PC-3 (cell line): ENCODE measurements at regions of chr5 and their contacts with region 1.

Region 1: GRCh38 chr5:159209438-159210305 is at the start of gene RNF145:
- DNase-seq: peak; percentile 72
- ATAC-seq: peak; percentile 61
- H3K4me3 ChIP-seq: peak within 1 kb of the TSS; percentile 95
- H3K27ac ChIP-seq: peak within 1 kb of the TSS; percentile 93
- H3K4me1 ChIP-seq: peaks cover 32% of the 10 kb centered on the region
- H3K27me3 ChIP-seq: no peaks in the 10 kb centered on the region
- CTCF ChIP-seq: no peak
- total RNA-seq, gene RNF145: 13.7 and 21.8 TPM in 2 replicates

Region 2: DNA sequence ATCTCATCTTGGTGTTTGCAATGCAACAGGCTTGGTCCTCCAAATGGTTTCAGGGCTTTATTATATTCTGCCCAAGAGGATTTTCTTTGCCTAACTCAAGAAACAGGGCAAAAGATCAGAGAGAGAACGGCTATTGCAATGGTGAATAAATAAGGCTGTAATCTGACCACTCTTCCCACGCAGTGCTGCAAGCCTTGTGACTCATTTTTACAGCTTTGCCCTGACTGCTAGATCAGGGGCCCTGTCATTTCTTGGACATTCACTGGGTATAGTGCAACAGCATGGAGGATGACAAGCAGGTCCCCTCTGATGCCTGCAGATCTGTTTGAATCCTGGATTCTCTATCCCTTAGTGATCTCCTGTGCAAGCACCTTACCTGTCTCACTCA is 569.1 kb before region 1 on chr5:
- CTCF ChIA-PET with region 1: no interaction called
- POLR2A ChIA-PET with region 1: no interaction called
- intact Hi-C with region 1: no loop called
- DNase-seq: peak; percentile 64
- ATAC-seq: peak; percentile 40; the same call in 1 of the 2 replicates
- H3K4me3 ChIP-seq: no peak overlapping the region
- H3K27ac ChIP-seq: peak overlapping the region; percentile 46
- H3K4me1 ChIP-seq: peaks cover 8% of the 10 kb centered on the region
- H3K27me3 ChIP-seq: no peaks in the 10 kb centered on the region
- CTCF ChIP-seq: no peak

Region 3: DNA sequence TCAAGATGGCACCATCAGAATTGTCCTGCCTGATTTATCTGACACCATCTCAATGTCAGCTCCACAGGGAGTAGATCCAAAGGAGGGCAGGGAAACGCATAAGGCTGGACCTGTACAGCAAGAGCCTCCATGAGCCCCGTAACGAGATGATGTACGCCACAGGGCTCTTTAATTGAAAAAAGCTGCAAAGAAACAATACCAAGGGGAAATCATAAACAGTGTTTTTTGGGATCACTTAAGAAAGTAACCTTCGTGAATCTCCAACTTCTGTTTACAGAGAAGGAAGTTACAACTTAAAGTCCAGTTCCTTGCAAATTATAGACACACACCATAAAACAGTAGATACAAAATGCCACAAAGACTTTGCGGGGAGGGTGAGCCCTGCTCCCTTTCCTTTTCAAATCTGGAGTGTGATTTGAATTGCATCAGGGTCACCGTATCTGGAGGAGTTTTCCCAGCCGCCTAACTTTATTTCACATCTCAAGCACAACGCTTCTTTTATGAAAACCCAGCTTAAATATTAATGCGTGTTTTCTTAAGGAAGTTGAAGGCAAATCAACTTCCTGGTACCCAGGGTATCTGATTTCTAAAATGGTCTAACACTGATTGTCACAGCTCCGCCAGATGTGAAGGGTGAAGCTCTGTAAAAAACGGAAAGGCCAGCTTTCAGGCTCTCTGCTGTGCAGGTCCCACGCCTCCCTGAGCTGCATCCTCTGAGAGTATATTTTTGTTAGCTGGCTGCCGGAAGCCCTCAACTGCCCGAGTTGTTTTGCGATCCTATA is 198.8 kb before region 1 on chr5:
- CTCF ChIA-PET with region 1: no interaction called
- POLR2A ChIA-PET with region 1: no interaction called
- intact Hi-C with region 1: no loop called
- DNase-seq: no peak
- ATAC-seq: no peak
- H3K4me3 ChIP-seq: no peak overlapping the region
- H3K27ac ChIP-seq: no peak overlapping the region
- H3K4me1 ChIP-seq: no peaks in the 10 kb centered on the region
- H3K27me3 ChIP-seq: no peaks in the 10 kb centered on the region
- CTCF ChIP-seq: no peak

Region 4: GRCh38 chr5:159156426-159157238 is 53.0 kb before region 1 on chr5:
- CTCF ChIA-PET with region 1: interaction called, 11 read pairs
- POLR2A ChIA-PET with region 1: interaction called, 4 read pairs
- intact Hi-C with region 1: loop called (anchors 2 kb)
- DNase-seq: peak; percentile 73
- ATAC-seq: peak; percentile 85
- H3K4me3 ChIP-seq: no peak overlapping the region
- H3K27ac ChIP-seq: no peak overlapping the region
- H3K4me1 ChIP-seq: no peaks in the 10 kb centered on the region
- H3K27me3 ChIP-seq: no peaks in the 10 kb centered on the region
- CTCF ChIP-seq: peak; percentile 80

Region 5: DNA sequence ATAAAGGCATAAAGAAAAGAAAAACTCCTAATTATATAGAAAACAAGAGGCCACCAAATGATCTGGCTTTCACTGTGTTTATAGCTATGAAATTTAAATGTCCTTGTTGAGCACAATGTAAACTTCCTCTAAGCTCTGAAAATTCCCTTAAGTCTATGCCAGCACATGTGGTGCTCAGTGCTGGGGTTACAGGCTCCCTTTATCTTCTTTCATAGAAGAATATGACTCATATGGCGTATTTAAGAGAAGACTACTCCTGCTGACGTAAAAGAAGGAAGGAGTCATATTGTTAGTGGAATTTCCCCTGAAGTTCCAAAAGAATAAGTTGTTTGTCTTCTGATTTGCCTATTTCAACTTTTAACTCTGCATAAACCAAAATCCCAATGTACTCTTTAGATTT is 30.7 kb before region 1 on chr5:
- CTCF ChIA-PET with region 1: no interaction called
- POLR2A ChIA-PET with region 1: no interaction called
- intact Hi-C with region 1: loop called (anchors 1 kb)
- DNase-seq: peak; percentile 81
- ATAC-seq: peak; percentile 92
- H3K4me3 ChIP-seq: no peak overlapping the region
- H3K27ac ChIP-seq: peak overlapping the region; percentile 98
- H3K4me1 ChIP-seq: peaks cover 47% of the 10 kb centered on the region
- H3K27me3 ChIP-seq: no peaks in the 10 kb centered on the region
- CTCF ChIP-seq: no peak

Region 6: GRCh38 chr5:159189029-159189709 is 20.5 kb before region 1 on chr5:
- CTCF ChIA-PET with region 1: interaction called, 3 read pairs
- POLR2A ChIA-PET with region 1: interaction called, 7 read pairs
- intact Hi-C with region 1: loop called (anchors 1 kb)
- DNase-seq: peak; percentile 53
- ATAC-seq: peak; percentile 56
- H3K4me3 ChIP-seq: no peak overlapping the region
- H3K27ac ChIP-seq: peak overlapping the region; percentile 75
- H3K4me1 ChIP-seq: peaks cover 37% of the 10 kb centered on the region
- H3K27me3 ChIP-seq: no peaks in the 10 kb centered on the region
- CTCF ChIP-seq: no peak

Region 7: DNA sequence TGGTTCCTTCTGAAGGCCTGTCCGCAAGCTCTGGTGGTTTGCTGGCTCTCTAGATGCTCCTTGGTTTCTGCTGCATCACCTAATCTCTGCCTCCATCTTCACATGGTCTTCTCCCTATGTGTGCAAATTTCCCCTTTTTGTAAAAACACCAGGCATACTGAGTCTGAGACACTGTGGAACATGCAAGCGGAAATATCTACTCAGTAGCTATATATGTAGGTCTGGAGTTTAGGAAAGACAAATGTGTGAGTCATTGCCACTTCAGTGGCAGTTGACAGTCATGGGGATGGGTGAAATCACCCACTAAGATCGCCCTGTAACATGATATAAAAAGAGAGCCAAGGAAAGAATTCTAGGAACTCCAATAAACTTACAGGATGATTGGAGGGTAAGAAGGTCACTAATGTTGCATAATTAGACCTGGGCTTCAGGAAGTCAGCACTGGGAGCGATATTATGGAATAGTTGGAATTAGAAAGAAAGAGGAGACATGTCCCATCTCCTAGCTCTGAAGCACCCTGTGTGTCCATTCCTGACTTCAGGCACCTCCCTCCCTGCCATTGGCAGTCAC is 30.7 kb after region 1 on chr5:
- CTCF ChIA-PET with region 1: no interaction called
- POLR2A ChIA-PET with region 1: no interaction called
- intact Hi-C with region 1: loop called (anchors 1 kb)
- DNase-seq: peak; percentile 85
- ATAC-seq: peak; percentile 99
- H3K4me3 ChIP-seq: 0 out of 2 replicates have a peak overlapping the region, but pooled peaks have one; percentile 17
- H3K27ac ChIP-seq: peak overlapping the region; percentile 42
- H3K4me1 ChIP-seq: peaks cover 17% of the 10 kb centered on the region
- H3K27me3 ChIP-seq: no peaks in the 10 kb centered on the region
- CTCF ChIP-seq: no peak

Region 8: DNA sequence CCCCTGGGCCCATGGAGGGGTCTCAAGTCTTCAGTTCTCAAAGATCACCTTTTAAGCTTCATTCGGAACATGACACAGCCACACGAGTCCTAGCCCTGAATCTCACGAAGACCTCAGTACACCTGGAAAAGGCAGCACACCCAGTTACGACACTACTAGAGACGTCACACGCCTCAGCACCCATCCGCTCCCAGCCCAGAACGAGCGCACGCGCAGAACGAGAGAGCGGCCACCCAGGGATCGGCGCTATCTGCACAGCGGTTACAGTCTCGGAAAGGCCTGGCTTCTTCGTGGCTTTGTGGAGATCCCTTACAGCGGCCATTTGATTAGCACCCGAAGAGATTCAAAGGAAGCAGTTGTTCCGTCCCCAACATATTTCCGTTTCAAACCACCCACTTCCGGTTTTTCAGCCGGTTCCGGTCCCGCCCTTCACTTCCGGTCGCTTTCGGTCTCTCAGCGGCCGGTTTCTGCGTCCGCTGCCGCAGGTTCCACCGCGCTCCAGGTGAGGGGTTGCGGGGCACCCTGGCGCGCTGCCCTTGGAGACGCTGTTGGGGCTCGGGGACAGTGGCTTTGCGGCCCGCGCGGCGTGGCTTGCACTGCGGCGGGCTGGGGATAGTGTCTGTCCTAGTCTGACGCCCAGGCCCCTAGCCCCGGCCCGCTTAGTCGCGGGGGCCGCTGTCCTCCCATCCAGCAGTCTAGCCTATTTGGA is 53.3 kb after region 1 on chr5 and contains the start of gene UBLCP1:
- CTCF ChIA-PET with region 1: no interaction called
- POLR2A ChIA-PET with region 1: no interaction called
- intact Hi-C with region 1: loop called (anchors 1 kb)
- DNase-seq: peak; percentile 75
- ATAC-seq: peak; percentile 91
- H3K4me3 ChIP-seq: peak within 1 kb of the TSS; percentile 95
- H3K27ac ChIP-seq: peak within 1 kb of the TSS; percentile 97
- H3K4me1 ChIP-seq: peaks cover 15% of the 10 kb centered on the region
- H3K27me3 ChIP-seq: no peaks in the 10 kb centered on the region
- CTCF ChIP-seq: no peak
- total RNA-seq, gene UBLCP1: 8.9 and 9.5 TPM in 2 replicates

Region 9: GRCh38 chr5:159616952-159617351 is 407.3 kb after region 1 on chr5:
- CTCF ChIA-PET with region 1: no interaction called
- POLR2A ChIA-PET with region 1: no interaction called
- intact Hi-C with region 1: no loop called
- DNase-seq: peak; percentile 51
- ATAC-seq: peak; percentile 70
- H3K4me3 ChIP-seq: no peak overlapping the region
- H3K27ac ChIP-seq: no peak overlapping the region
- H3K4me1 ChIP-seq: peaks cover 9% of the 10 kb centered on the region
- H3K27me3 ChIP-seq: no peaks in the 10 kb centered on the region
- CTCF ChIP-seq: no peak